A673 (cell line): ENCODE measurements at regions of chr14 and their contacts with region 1.

Region 1: GRCh38 chr14:72904840-72905561 is 11.1 kb upstream of the DPF3 start:
- DNase-seq: peak; percentile 86
- H3K4me3 ChIP-seq: no peak overlapping the region
- H3K27ac ChIP-seq: no peak overlapping the region
- H3K4me1 ChIP-seq: peaks cover 38% of the 10 kb centered on the region
- H3K27me3 ChIP-seq: no peaks in the 10 kb centered on the region
- CTCF ChIP-seq: peak; percentile 95

Region 2: DNA sequence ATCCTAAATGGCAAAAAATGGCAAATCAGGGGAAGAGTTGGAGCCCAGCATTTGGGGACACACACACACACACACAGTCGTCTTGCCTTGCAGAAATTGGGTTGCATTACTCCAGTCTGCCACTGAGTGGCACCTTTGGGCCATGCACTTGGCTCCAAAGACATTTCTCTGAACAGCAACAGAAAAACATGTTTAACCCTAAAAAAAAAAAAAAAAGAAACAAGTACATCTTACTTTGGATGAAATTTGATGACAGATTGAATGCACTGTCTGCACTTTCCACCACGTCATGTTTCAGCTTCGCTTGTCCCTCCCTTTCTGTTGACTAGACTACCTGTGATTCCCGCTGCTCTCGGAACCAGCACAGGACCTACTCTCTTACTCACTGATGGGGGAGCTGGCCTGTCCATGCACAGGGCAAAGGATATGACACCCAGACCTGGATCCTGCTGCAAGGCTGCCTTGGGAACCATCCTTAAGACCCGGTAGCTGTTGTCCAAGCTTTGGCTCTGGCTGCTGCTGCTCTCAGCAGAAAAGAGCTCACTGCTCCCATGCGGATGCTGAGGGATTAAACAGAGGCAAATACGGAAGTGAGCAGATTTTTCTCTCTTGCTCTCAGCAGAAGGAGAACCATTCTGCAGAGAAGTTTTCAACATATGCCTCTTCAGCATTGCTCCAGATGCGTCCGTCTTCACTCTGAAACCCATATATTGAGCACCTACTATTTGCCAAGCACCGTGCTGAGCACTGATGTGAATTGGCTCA is 387.9 kb before region 1 on chr14:
- CTCF ChIA-PET with region 1: interaction called, 17 read pairs
- POLR2A ChIA-PET with region 1: no interaction called
- intact Hi-C with region 1: loop called (anchors 1 kb)
- DNase-seq: peak; percentile 85
- H3K4me3 ChIP-seq: no peak overlapping the region
- H3K27ac ChIP-seq: no peak overlapping the region
- H3K4me1 ChIP-seq: no peaks in the 10 kb centered on the region
- H3K27me3 ChIP-seq: no peaks in the 10 kb centered on the region
- CTCF ChIP-seq: peak; percentile 89

Region 3: DNA sequence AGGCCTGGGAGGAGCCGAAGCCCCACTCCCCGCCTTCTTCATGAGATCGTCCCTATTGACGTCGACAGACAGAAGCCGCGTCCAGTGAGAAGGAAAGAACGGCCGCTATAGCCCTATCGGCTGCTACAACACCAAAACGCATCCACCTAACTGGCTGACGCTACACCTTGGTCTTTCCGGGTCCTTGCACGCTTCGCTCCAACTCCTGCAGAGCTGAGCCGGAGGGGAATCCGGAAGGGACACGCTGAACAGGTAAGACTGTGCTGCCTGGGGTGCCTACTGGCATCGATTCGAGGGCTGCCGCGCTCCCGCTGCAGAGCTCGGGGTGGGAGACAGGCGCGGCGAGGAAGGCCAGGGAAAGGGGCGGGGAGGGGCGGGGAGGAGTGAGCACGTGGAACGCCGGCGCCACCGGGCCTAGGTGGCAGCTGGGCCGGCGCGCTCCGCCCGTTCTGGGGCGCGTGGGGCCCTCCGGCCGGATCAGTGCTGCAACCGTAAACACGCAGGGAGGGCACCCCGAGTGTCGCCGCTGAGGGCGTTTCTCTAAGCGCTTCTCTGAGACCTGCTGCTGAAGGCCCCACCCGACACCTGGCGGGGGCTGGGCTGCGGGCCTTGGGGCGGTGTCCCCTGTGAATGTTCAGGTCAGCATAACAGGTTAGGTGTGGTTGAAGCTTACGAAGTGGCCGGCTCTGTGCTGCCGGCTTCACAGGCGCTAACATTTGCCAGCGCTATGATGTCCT is 21.5 kb after region 1 on chr14 and contains the start of gene DCAF4:
- CTCF ChIA-PET with region 1: no interaction called
- POLR2A ChIA-PET with region 1: no interaction called
- intact Hi-C with region 1: loop called (anchors 2 kb)
- DNase-seq: peak; percentile 99
- H3K4me3 ChIP-seq: peak within 1 kb of the TSS; percentile 84
- H3K27ac ChIP-seq: peak within 1 kb of the TSS; percentile 70
- H3K4me1 ChIP-seq: no peaks in the 10 kb centered on the region
- H3K27me3 ChIP-seq: no peaks in the 10 kb centered on the region
- CTCF ChIP-seq: no peak
- total RNA-seq, gene DCAF4: 23.4 and 25.1 TPM in 2 replicates

Region 4: GRCh38 chr14:72948481-72949138 is 43.6 kb after region 1 on chr14:
- CTCF ChIA-PET with region 1: no interaction called
- POLR2A ChIA-PET with region 1: no interaction called
- intact Hi-C with region 1: loop called (anchors 2 kb)
- DNase-seq: peak; percentile 64
- H3K4me3 ChIP-seq: no peak overlapping the region
- H3K27ac ChIP-seq: no peak overlapping the region
- H3K4me1 ChIP-seq: no peaks in the 10 kb centered on the region
- H3K27me3 ChIP-seq: no peaks in the 10 kb centered on the region
- CTCF ChIP-seq: peak; percentile 93